ENCODE measurements at regions of chr9 and their contacts with region 1.

Region 1: DNA sequence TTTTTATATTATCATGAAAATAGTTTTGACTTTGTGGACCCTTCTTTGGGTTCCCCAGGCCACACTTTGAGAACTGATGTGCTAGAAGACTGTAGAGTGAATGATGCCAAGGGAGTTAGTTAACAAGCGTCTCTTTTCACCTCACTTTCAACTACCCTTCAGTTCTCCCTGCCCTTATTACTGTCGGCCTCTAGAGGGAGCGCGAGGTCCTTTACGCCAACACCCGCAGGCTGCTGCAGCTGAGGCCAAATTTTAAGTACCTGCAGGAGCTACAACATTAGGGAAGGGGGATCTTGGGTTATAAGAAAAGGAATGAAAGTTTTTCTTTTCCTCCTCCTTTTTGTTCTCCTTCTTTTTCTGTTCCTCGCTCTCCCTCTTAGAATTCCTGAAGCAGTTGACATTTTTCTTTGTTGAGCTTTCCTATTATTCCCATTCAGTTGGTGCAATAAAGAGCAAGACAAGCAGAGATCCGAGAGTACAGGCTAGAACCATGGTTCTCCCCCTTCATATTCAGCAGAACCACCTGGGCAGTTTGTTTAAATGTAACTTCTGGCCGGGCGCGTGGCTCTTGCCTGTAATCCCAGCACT is 84.0 kb downstream of the ZFAND5 start:
- DNase-seq: peak; percentile 78
- ATAC-seq: peak; percentile 81
- H3K4me3 ChIP-seq: no peak overlapping the region
- H3K4me3 Mint-ChIP-seq: no peak overlapping the region
- H3K27ac ChIP-seq: no peak overlapping the region
- H3K27ac Mint-ChIP-seq: no peak overlapping the region
- H3K4me1 ChIP-seq: no peaks in the 10 kb centered on the region
- H3K4me1 Mint-ChIP-seq: no peaks in the 10 kb centered on the region
- H3K27me3 ChIP-seq: peaks cover 0 to 3% (median 0%) of the 10 kb centered on the region in 4 experiments
- H3K27me3 Mint-ChIP-seq: no peaks in the 10 kb centered on the region
- CTCF ChIP-seq: peak; percentile 97

Region 2: DNA sequence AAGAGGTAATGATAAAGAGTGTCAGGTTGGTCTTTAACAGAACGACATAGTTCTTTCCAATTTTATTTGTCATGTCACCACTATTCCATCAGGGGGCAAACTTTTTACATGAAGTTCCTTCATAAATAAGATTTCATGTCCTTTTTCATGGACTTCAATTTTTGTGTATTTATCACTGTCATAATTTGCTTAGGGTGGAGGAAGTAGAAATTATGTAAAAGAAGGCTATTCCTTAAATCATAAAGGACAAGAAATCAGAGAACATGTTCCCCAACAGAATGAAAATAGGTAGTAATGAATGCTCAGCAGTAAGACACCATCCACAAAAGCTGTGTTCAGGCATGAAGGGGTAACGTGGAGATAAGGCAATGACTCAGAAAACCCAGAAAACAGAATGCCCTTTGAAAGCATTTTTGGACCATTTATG is 11.3 kb after region 1 on chr9:
- CTCF ChIA-PET with region 1: interaction called, 33 read pairs
- POLR2A ChIA-PET with region 1: no interaction called
- intact Hi-C with region 1: no loop called
- DNase-seq: peak; percentile 56
- ATAC-seq: peak; percentile 31
- H3K4me3 ChIP-seq: no peak overlapping the region
- H3K4me3 Mint-ChIP-seq: no peak overlapping the region
- H3K27ac ChIP-seq: no peak overlapping the region
- H3K27ac Mint-ChIP-seq: no peak overlapping the region
- H3K4me1 ChIP-seq: peaks cover 7 to 19% of the 10 kb centered on the region in 2 donors
- H3K4me1 Mint-ChIP-seq: peaks cover 16% of the 10 kb centered on the region
- H3K27me3 ChIP-seq: peaks cover 0 to 5% (median 0%) of the 10 kb centered on the region in 4 experiments
- H3K27me3 Mint-ChIP-seq: peaks cover 10% of the 10 kb centered on the region
- CTCF ChIP-seq: peak; percentile 78

Region 3: DNA sequence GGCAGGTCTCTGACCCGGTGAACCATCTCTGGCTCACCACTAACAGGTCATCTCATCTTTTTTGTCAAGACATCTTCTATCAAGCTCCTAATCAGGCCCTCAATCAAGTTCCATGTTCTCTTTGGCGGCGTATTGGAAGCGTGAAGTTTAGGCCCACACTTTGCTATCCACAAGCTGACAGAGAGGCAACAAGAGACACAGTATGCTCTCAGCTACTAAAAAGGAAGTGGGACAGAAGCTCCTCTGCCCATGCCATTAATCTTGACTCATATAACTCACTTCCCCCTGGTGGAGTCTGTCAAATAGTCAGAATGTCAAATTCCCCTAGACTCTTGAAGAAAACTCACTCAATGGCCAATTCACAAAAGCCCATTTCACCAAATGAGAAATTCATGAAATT is 162.8 kb after region 1 on chr9:
- CTCF ChIA-PET with region 1: interaction called, 11 read pairs
- POLR2A ChIA-PET with region 1: no interaction called
- intact Hi-C with region 1: no loop called
- DNase-seq: peak; percentile 67
- ATAC-seq: peak; percentile 81
- H3K4me3 ChIP-seq: no peak overlapping the region
- H3K4me3 Mint-ChIP-seq: peak overlapping the region; percentile 20
- H3K27ac ChIP-seq: peak overlapping the region; percentile 5 to 19
- H3K27ac Mint-ChIP-seq: peak overlapping the region; percentile 77
- H3K4me1 ChIP-seq: peaks cover 26 to 33% of the 10 kb centered on the region in 2 donors
- H3K4me1 Mint-ChIP-seq: peaks cover 31% of the 10 kb centered on the region
- H3K27me3 ChIP-seq: no peaks in the 10 kb centered on the region
- H3K27me3 Mint-ChIP-seq: no peaks in the 10 kb centered on the region
- CTCF ChIP-seq: peak; percentile 31

Region 4: GRCh38 chr9:72592502-72593403 is 311.7 kb after region 1 on chr9:
- CTCF ChIA-PET with region 1: interaction called, 293 read pairs
- POLR2A ChIA-PET with region 1: no interaction called
- intact Hi-C with region 1: loop called (anchors 1 kb)
- DNase-seq: peak; percentile 73
- ATAC-seq: peak; percentile 67
- H3K4me3 ChIP-seq: no peak overlapping the region
- H3K4me3 Mint-ChIP-seq: no peak overlapping the region
- H3K27ac ChIP-seq: no peak overlapping the region
- H3K27ac Mint-ChIP-seq: no peak overlapping the region
- H3K4me1 ChIP-seq: peaks cover 0 to 3% of the 10 kb centered on the region in 2 donors
- H3K4me1 Mint-ChIP-seq: peaks cover 5% of the 10 kb centered on the region
- H3K27me3 ChIP-seq: peaks cover 0 to 5% (median 0%) of the 10 kb centered on the region in 4 experiments
- H3K27me3 Mint-ChIP-seq: peaks cover 5% of the 10 kb centered on the region
- CTCF ChIP-seq: peak; percentile 92

Region 5: GRCh38 chr9:72823971-72824370 is 543.0 kb after region 1 on chr9:
- CTCF ChIA-PET with region 1: interaction called, 25 read pairs
- POLR2A ChIA-PET with region 1: no interaction called
- intact Hi-C with region 1: loop called (anchors 2 kb)
- DNase-seq: no peak
- ATAC-seq: no peak
- H3K4me3 ChIP-seq: no peak overlapping the region
- H3K4me3 Mint-ChIP-seq: no peak overlapping the region
- H3K27ac ChIP-seq: no peak overlapping the region
- H3K27ac Mint-ChIP-seq: no peak overlapping the region
- H3K4me1 ChIP-seq: no peaks in the 10 kb centered on the region
- H3K4me1 Mint-ChIP-seq: no peaks in the 10 kb centered on the region
- H3K27me3 ChIP-seq: no peaks in the 10 kb centered on the region
- H3K27me3 Mint-ChIP-seq: no peaks in the 10 kb centered on the region
- CTCF ChIP-seq: no peak

Region 6: GRCh38 chr9:73023025-73023541 is 742.1 kb after region 1 on chr9:
- CTCF ChIA-PET with region 1: interaction called, 24 read pairs
- POLR2A ChIA-PET with region 1: no interaction called
- intact Hi-C with region 1: loop called (anchors 2 kb)
- DNase-seq: peak; percentile 54
- ATAC-seq: no peak
- H3K4me3 ChIP-seq: no peak overlapping the region
- H3K4me3 Mint-ChIP-seq: no peak overlapping the region
- H3K27ac ChIP-seq: no peak overlapping the region
- H3K27ac Mint-ChIP-seq: no peak overlapping the region
- H3K4me1 ChIP-seq: peaks cover 15% of the 10 kb centered on the region in 2 donors
- H3K4me1 Mint-ChIP-seq: peaks cover 39% of the 10 kb centered on the region
- H3K27me3 ChIP-seq: no peaks in the 10 kb centered on the region
- H3K27me3 Mint-ChIP-seq: no peaks in the 10 kb centered on the region
- CTCF ChIP-seq: peak; percentile 80